GM12878 (cell line): ENCODE measurements at regions of chr3 and their contacts with region 1.

Region 1: GRCh38 chr3:71710906-71711494 is 14.2 kb downstream of the EIF4E3 start:
- DNase-seq: peak; percentile 21
- ATAC-seq: peak; percentile 89
- H3K4me3 ChIP-seq: no peak overlapping the region
- H3K27ac ChIP-seq: no peak overlapping the region
- H3K4me1 ChIP-seq: no peaks in the 10 kb centered on the region
- H3K27me3 ChIP-seq: 0 out of 4 replicates have a peak, but pooled peaks cover 0 to 3% of the 10 kb centered on the region in 2 experiments
- CTCF ChIP-seq: peak; percentile 49 to 74 (median 62); a peak in 5 of 6 replicates
- EP300 ChIP-seq: no peak
- POLR2A ChIP-seq: no peak
- RAD21 ChIP-seq: peak; percentile 84

Region 2: DNA sequence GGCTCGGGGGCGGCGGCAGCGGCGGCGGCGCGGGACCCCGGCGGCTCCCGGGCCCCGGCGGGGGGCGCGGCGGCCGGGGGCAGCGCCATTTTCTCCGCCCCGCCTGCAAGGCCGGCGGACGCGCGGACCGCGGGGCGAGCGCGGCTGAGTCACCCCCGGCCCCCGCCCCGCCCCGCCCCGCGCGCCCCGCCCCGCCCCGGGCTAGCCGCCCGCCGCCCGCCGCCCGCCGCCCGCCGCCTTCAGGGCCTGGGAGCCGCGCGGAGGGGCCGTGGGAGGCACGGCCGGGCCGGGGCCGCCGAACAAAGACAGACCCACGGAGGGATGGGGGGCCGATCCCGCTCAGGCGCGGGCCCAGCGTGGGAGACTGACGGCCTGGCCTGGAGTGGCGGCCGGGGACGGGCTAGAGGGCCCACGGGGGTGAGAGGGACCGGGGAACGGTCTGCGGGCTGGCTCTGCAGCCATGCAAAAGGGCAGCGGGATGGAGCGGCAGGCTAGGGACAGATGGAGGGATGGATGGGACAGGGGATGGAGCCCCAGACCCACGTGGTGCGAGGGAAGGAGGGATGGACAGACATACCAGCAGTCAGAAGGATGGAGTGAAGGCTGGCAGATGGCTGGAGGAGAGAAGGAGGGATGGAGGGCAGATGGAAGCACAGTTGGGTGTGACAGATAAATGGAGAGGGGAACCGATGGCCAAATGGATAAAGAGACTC is 14.4 kb after region 1 on chr3 and contains the start of gene EIF4E3:
- CTCF ChIA-PET with region 1: interaction called, 18 read pairs
- POLR2A ChIA-PET with region 1: no interaction called
- RAD21 ChIA-PET with region 1: no interaction called
- SMC1A ChIA-PET with region 1: no interaction called
- in situ Hi-C with region 1: no loop called
- intact Hi-C with region 1: no loop called
- DNase-seq: no peak
- ATAC-seq: no peak
- H3K4me3 ChIP-seq: peak within 1 kb of the TSS; percentile 60; the same call in 1 of the 2 replicates
- H3K27ac ChIP-seq: no peak within 1 kb of the TSS
- H3K4me1 ChIP-seq: peaks cover 10% of the 10 kb centered on the region
- H3K27me3 ChIP-seq: peaks cover 9 to 12% of the 10 kb centered on the region in 2 experiments
- CTCF ChIP-seq: no peak
- EP300 ChIP-seq: no peak
- POLR2A ChIP-seq: no peak
- RAD21 ChIP-seq: no peak
- polyA plus RNA-seq, gene EIF4E3: 0.05 to 0.18 TPM

Region 3: GRCh38 chr3:71859123-71859519 is 148.1 kb after region 1 on chr3:
- CTCF ChIA-PET with region 1: interaction called, 5 read pairs
- POLR2A ChIA-PET with region 1: no interaction called
- RAD21 ChIA-PET with region 1: interaction called, 3 read pairs
- SMC1A ChIA-PET with region 1: no interaction called
- in situ Hi-C with region 1: no loop called
- intact Hi-C with region 1: loop called (anchors 5 kb)
- DNase-seq: no peak
- ATAC-seq: peak; percentile 71
- H3K4me3 ChIP-seq: no peak overlapping the region
- H3K27ac ChIP-seq: no peak overlapping the region
- H3K4me1 ChIP-seq: no peaks in the 10 kb centered on the region
- H3K27me3 ChIP-seq: peaks cover 2 to 3% of the 10 kb centered on the region in 2 experiments; a peak in 2 of 4 replicates
- CTCF ChIP-seq: peak; percentile 34 to 42 (median 38); a peak in 5 of 6 replicates
- EP300 ChIP-seq: no peak
- POLR2A ChIP-seq: no peak
- RAD21 ChIP-seq: peak; percentile 52

Region 4: GRCh38 chr3:71962561-71963240 is 251.7 kb after region 1 on chr3:
- CTCF ChIA-PET with region 1: no interaction called
- POLR2A ChIA-PET with region 1: no interaction called
- RAD21 ChIA-PET with region 1: no interaction called
- SMC1A ChIA-PET with region 1: no interaction called
- in situ Hi-C with region 1: no loop called
- intact Hi-C with region 1: no loop called
- DNase-seq: no peak
- ATAC-seq: no peak
- H3K4me3 ChIP-seq: no peak overlapping the region
- H3K27ac ChIP-seq: no peak overlapping the region
- H3K4me1 ChIP-seq: peaks cover 14% of the 10 kb centered on the region
- H3K27me3 ChIP-seq: no peaks in the 10 kb centered on the region
- CTCF ChIP-seq: no peak
- EP300 ChIP-seq: no peak
- POLR2A ChIP-seq: no peak
- RAD21 ChIP-seq: no peak

Region 5: DNA sequence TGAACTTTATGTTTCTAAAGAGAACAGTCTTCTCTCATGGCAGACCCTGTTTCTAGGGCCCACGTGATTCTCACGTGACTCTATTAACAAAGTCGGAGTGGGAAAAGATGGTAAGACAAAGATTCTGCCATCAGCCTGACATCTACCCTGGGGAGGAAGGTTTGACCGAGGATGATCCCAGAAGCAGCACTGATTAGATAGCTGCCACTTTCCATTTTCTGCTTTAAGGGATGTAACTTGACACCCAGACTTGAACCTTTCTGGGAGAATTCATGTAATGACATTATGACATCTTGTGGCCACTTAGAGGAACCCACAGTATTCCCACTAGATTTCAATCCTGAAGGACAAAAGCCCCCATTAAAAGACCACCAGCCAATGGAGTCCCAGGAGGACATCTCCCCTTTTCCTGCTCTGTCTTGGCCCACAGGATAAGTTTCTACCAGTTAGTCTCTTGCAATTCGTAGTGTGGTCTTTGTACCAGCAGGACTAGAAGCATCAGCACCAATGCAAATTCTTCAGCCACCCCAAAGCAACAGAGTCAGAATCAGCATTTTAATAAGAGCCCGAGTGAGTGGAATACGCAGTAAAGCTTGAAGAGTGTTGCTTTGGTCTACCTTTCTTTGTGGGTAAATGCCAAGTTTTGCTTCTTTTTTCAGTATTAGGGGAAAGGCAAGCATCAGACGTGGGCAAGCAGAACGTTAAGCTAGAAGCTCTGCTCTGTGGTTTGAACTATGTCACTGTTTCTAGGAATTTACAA is 554.4 kb after region 1 on chr3:
- CTCF ChIA-PET with region 1: no interaction called
- POLR2A ChIA-PET with region 1: no interaction called
- RAD21 ChIA-PET with region 1: no interaction called
- SMC1A ChIA-PET with region 1: no interaction called
- in situ Hi-C with region 1: no loop called
- intact Hi-C with region 1: loop called (anchors 10 kb)
- DNase-seq: no peak
- ATAC-seq: peak; percentile 57
- H3K4me3 ChIP-seq: no peak overlapping the region
- H3K27ac ChIP-seq: no peak overlapping the region
- H3K4me1 ChIP-seq: peaks cover 43% of the 10 kb centered on the region
- H3K27me3 ChIP-seq: no peaks in the 10 kb centered on the region
- CTCF ChIP-seq: peak; percentile 3 to 35 (median 23); a peak in 2 of 6 replicates
- EP300 ChIP-seq: no peak
- POLR2A ChIP-seq: no peak
- RAD21 ChIP-seq: peak; percentile 62